ENCODE measurements at regions of chr2 and their contacts with region 1.

Region 1: GRCh38 chr2:54054271-54054670 is 61.1 kb upstream of the ACYP2 start:
- DNase-seq: no peak
- H3K4me3 Mint-ChIP-seq: peak overlapping the region; percentile 48
- H3K27ac Mint-ChIP-seq: peak overlapping the region; percentile 56
- H3K4me1 Mint-ChIP-seq: peaks cover 16% of the 10 kb centered on the region
- H3K27me3 Mint-ChIP-seq: no peaks in the 10 kb centered on the region

Region 2: GRCh38 chr2:53913721-53914120 is 140.6 kb before region 1 on chr2:
- intact Hi-C with region 1: no loop called
- DNase-seq: peak; percentile 72
- H3K4me3 Mint-ChIP-seq: peak overlapping the region; percentile 20
- H3K27ac Mint-ChIP-seq: peak overlapping the region; percentile 60
- H3K4me1 Mint-ChIP-seq: peaks cover 9% of the 10 kb centered on the region
- H3K27me3 Mint-ChIP-seq: no peaks in the 10 kb centered on the region

Region 3: DNA sequence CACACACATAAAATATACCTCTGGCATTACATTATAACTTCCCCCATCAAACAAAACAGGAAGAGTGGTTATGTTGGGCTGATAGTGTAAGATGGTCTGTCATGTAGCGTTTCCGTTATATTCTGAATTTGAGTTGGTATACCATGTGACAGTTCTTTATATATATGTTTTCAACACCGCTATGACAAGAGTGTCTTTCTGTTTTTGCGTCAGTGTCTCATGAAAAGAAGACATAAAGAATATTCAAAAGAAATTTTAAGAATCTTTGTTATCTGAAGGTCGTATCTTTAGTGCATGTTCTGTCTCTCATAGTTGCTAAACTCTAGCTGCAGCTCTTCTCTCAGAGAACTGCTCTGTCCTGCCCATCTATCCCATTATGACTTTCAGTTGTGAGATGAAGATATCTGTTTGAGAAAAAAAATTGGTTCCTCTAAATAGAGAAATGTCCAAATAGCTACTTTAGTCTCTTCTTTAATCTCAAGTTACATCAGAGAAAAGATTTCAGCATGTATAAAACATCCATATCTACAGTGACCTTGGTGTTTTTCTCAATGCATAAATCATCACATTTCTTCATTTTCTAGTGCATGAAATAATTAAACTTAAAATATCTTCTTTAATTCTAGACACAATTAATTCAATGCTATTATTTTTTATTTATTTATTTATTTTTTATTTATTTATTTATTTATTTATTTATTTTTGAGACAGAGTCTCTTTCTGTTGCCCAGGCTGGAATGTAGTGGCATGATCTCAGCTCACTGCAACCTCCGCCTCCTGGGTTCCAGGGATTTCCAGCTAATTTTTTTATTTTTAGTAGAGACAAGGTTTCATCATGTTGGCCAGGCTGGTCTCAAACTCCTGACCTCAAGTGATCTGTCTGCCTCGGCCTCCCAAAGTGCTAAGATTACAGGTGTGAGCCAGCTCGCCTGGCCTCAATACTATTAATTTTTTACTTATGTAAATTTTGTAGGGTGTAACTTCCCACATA is 59.2 kb before region 1 on chr2:
- intact Hi-C with region 1: loop called (anchors 1 kb)
- DNase-seq: peak; percentile 69
- H3K4me3 Mint-ChIP-seq: peak overlapping the region; percentile 58
- H3K27ac Mint-ChIP-seq: peak overlapping the region; percentile 68
- H3K4me1 Mint-ChIP-seq: peaks cover 20% of the 10 kb centered on the region
- H3K27me3 Mint-ChIP-seq: no peaks in the 10 kb centered on the region

Region 4: DNA sequence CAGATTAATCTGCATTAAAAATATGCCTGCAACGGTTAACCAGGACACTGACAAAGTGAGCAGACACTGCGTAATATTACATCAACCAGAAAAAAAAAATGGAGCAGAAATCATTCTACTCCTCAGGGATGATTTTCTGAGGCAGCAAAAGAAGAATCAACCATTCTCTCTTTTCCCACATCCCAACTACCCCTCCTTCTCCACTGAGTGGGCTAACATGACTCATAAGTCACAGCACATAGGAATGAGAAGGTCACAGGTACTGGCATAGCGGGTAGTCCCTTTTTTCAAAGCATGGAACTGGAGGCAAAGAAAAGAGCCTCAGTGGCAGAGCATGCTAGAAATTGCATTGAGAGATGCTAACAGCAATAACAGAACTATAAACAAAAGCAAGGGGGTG is 256.0 kb after region 1 on chr2:
- intact Hi-C with region 1: no loop called
- DNase-seq: no peak
- H3K4me3 Mint-ChIP-seq: no peak overlapping the region
- H3K27ac Mint-ChIP-seq: no peak overlapping the region
- H3K4me1 Mint-ChIP-seq: no peaks in the 10 kb centered on the region
- H3K27me3 Mint-ChIP-seq: peaks cover 4% of the 10 kb centered on the region